ENCODE measurements at regions of chr1 and their contacts with region 1.

Region 1: DNA sequence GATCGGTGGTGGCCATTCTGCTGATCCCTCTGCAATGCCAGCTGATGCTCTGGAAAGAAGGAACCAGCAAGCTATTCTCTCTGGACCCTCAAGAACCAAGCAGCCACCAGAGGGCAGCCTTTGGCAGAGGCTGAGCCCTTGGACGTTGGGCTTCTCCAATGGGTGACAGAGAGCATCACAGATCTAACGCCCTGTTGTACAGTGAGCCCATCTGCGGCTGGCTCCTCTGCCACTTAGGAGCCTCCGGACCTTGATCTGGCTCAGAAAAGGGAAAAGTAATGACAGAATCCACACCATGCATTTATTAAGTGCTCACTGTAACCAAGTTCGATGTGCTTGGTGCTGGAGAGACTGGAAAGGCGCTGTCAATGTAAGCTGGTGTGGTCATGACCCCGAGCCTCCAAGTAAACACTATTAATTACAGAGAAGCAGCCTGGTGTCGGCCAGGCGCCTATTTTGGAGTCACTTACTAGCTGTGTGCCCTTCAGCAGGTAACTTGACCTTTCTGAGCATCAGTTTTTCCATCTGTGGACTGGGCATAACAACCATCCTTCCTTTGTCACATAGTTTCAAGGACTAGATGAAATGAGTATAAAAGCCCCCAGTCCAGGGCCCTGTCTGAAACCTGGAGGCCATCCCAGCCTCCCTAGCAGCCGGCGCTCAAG is 34.9 kb downstream of the ECE1 start:
- DNase-seq: peak; percentile 55 to 85
- ATAC-seq: peak; percentile 92 to 96
- H3K4me3 ChIP-seq: no peak overlapping the region
- H3K27ac ChIP-seq: peak overlapping the region; percentile 44 to 56; a peak in 5 of 6 replicates
- H3K4me1 ChIP-seq: peaks cover 29% of the 10 kb centered on the region
- CTCF ChIP-seq: peak; percentile 74
- EP300 ChIP-seq: no peak
- POLR2A ChIP-seq: no peak
- RAD21 ChIP-seq: peak; percentile 91 to 96

Region 2: DNA sequence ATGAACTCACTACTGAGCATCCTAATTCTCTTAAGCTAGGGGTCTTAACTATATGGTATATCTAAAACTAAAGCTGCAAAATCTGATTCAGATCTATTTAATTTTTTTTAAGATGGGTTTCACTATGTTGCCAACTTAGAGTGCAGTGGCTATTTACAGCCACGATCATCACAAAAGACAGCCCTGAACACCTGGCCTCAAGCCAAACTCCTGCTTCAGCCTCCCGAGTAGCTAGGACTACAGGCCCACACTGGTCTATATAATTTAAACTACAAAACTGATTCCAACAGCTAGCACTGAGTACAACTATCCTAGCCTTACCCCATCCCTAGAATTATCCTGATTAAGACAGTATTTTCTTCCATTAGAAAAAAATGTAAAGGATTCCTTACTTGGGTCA is 115.8 kb before region 1 on chr1:
- CTCF ChIA-PET with region 1: no interaction called
- POLR2A ChIA-PET with region 1: no interaction called
- DNase-seq: no peak
- ATAC-seq: no peak
- H3K4me3 ChIP-seq: no peak overlapping the region
- H3K27ac ChIP-seq: no peak overlapping the region
- H3K4me1 ChIP-seq: no peaks in the 10 kb centered on the region
- CTCF ChIP-seq: no peak
- EP300 ChIP-seq: no peak
- POLR2A ChIP-seq: no peak
- RAD21 ChIP-seq: no peak

Region 3: DNA sequence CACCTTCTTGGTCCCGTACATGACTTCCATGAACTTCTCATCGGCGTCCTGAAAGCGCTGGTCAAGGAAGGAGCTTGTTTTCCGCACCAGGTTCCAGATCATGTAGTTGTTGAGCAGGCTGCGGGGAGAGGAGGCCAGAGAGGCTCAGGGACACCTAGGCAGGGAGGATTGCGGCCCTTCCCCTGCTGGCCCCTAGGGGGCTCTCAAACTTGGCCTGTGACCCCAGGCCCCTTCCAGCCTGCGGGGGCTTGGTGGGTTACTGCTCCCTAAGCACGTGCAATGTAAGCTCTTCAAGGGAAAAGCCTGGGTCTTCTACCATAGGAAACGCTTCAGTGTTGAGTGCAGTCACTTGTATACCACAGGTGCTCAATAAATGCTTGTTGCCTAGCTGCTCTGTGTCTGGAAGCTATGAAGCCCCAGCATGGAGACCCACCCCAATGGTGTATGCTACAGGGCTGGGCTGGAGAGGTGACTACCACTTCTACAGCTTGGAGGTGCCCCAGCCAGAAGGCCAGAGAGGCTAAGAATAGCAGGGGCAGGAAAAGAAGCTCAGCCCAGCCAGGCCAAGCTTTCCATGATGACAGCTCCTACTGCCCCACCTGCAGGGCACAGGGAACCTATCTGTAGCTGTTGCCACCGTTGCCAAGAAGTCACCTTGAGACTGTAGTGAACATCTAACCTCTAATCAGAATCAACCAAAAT is 10.3 kb before region 1 on chr1:
- CTCF ChIA-PET with region 1: interaction called, 36 read pairs
- POLR2A ChIA-PET with region 1: no interaction called
- DNase-seq: no peak
- ATAC-seq: peak in 1 of 2 experiments; percentile 70; a peak in 3 of 6 replicates
- H3K4me3 ChIP-seq: no peak overlapping the region
- H3K27ac ChIP-seq: no peak overlapping the region
- H3K4me1 ChIP-seq: peaks cover 6% of the 10 kb centered on the region; the same call in 1 of the 3 replicates
- CTCF ChIP-seq: peak; percentile 30; the same call in 1 of the 3 replicates
- EP300 ChIP-seq: no peak
- POLR2A ChIP-seq: no peak
- RAD21 ChIP-seq: no peak

Region 4: GRCh38 chr1:21287905-21288514 is 32.6 kb after region 1 on chr1:
- CTCF ChIA-PET with region 1: interaction called, 13 read pairs
- POLR2A ChIA-PET with region 1: no interaction called
- DNase-seq: no peak
- ATAC-seq: no peak
- H3K4me3 ChIP-seq: no peak overlapping the region
- H3K27ac ChIP-seq: no peak overlapping the region
- H3K4me1 ChIP-seq: peaks cover 32% of the 10 kb centered on the region
- CTCF ChIP-seq: no peak
- EP300 ChIP-seq: no peak
- POLR2A ChIP-seq: no peak
- RAD21 ChIP-seq: no peak

Region 5: GRCh38 chr1:21313203-21313885 is 57.9 kb after region 1 on chr1:
- CTCF ChIA-PET with region 1: interaction called, 13 read pairs
- POLR2A ChIA-PET with region 1: no interaction called
- DNase-seq: no peak
- ATAC-seq: no peak
- H3K4me3 ChIP-seq: no peak overlapping the region
- H3K27ac ChIP-seq: peak overlapping the region in 1 of 2 experiments; percentile 29; a peak in 2 of 6 replicates
- H3K4me1 ChIP-seq: peaks cover 51% of the 10 kb centered on the region
- CTCF ChIP-seq: no peak
- EP300 ChIP-seq: no peak
- POLR2A ChIP-seq: no peak
- RAD21 ChIP-seq: no peak

Region 6: GRCh38 chr1:21344750-21345443 is 89.5 kb after region 1 on chr1:
- CTCF ChIA-PET with region 1: interaction called, 17 read pairs
- POLR2A ChIA-PET with region 1: no interaction called
- DNase-seq: no peak
- ATAC-seq: peak; percentile 25 to 55
- H3K4me3 ChIP-seq: peak overlapping the region; percentile 75
- H3K27ac ChIP-seq: peak overlapping the region; percentile 76 to 93
- H3K4me1 ChIP-seq: peaks cover 42% of the 10 kb centered on the region
- CTCF ChIP-seq: no peak
- EP300 ChIP-seq: no peak
- POLR2A ChIP-seq: no peak
- RAD21 ChIP-seq: no peak

Measured in A549 (cell line).